ENCODE measurements at regions of chr14 and their contacts with region 1.

Region 1: GRCh38 chr14:24431569-24432258 is 2.0 kb downstream of the KHNYN start:
- DNase-seq: peak; percentile 95
- H3K4me3 ChIP-seq: peak overlapping the region; percentile 82
- H3K27ac ChIP-seq: peak overlapping the region; percentile 68
- H3K4me1 ChIP-seq: peaks cover 39% of the 10 kb centered on the region
- CTCF ChIP-seq: peak; percentile 97

Region 2: DNA sequence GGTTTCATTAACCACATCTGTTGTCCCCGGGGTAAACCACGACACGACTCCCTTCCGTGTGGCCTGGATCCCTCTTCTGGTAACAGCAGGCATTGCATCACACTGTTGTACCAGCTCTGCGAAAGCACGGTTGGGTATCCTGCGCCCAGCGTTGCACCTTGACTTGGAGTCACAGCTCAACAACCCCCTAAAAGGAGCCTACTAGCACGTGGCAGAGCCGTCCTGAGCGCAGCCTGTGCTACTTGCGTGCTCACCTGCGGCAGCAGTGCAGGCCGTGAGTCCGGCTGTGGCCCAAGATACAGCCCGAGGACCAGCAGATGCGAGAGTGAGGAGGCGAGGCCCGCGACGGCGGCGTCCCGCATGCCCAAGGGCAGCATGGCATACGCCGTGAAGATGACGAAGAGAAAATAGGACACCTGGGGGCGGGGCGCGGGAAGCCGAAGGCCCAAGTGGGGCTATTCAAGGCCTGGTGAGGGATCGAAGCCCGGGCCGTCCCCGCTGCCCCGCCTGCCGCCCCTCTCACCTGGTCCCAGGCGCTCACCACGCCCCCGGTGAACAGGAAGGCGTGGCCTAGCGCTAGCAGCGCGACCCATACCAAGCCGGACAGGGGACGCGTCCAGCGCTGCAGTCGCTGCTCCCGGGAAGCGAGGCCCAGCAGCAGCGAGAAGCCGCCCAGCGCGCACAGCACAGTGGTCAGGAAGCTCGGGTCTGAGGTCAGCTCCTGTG is 99.3 kb before region 1 on chr14:
- CTCF ChIA-PET with region 1: interaction called, 26 read pairs
- POLR2A ChIA-PET with region 1: interaction called, 6 read pairs
- intact Hi-C with region 1: loop called (anchors 1 kb)
- DNase-seq: peak; percentile 92
- H3K4me3 ChIP-seq: peak overlapping the region; percentile 26
- H3K27ac ChIP-seq: no peak overlapping the region
- H3K4me1 ChIP-seq: peaks cover 26% of the 10 kb centered on the region
- CTCF ChIP-seq: peak; percentile 84

Region 3: DNA sequence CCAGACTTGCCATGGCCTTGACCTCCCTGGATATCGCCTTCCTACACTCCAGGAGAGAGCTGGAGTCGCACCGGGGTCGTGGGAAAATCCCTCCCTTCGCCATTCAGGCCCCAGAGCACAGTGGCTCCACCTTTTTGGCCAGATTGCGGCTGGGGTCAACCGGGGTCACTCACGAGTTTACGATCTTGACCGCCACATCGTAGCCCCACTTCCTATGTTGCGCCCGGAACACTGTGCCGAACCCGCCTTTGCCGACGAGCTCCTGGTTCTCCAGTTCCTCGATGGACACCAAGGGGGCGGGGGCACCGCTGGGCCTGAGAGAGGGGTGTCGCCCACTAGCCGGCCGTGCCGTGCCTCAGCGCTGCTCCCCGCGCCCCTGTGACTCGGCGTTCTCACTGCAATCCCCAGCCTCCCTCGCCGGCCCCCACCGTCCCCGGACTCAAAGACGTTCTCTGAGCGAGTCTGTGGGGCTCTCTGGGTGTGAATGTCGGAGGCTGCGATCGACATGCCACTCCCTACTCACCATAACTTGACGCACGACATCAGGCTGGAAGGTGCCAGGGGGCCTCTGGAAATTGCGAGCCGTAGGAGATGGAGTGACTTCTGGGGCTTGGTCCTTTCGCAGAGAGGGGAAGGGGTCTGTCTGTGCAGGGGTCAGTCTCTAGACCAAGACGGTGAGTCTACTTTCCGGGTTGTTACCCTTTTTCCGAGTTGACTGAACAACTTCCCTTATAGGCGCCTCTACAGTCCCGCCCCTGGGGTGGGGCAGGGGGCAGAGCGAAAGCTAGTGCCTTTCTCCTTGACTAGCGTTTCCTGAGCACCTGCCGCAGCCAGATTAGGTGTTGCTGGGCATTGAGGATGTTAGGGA is 92.2 kb before region 1 on chr14 and contains the start of gene RIPK3:
- CTCF ChIA-PET with region 1: interaction called, 16 read pairs
- POLR2A ChIA-PET with region 1: interaction called, 6 read pairs
- intact Hi-C with region 1: no loop called
- DNase-seq: peak; percentile 70
- H3K4me3 ChIP-seq: peak within 1 kb of the TSS; percentile 71
- H3K27ac ChIP-seq: no peak within 1 kb of the TSS
- H3K4me1 ChIP-seq: peaks cover 14% of the 10 kb centered on the region
- CTCF ChIP-seq: no peak
- total RNA-seq, gene RIPK3: 8.1 and 13.8 TPM in 2 replicates

Region 4: GRCh38 chr14:24411443-24412389 is 20.0 kb before region 1 on chr14:
- CTCF ChIA-PET with region 1: interaction called, 10 read pairs
- POLR2A ChIA-PET with region 1: no interaction called
- intact Hi-C with region 1: no loop called
- DNase-seq: peak; percentile 66
- H3K4me3 ChIP-seq: no peak overlapping the region
- H3K27ac ChIP-seq: no peak overlapping the region
- H3K4me1 ChIP-seq: no peaks in the 10 kb centered on the region
- CTCF ChIP-seq: peak; percentile 77

Region 5: DNA sequence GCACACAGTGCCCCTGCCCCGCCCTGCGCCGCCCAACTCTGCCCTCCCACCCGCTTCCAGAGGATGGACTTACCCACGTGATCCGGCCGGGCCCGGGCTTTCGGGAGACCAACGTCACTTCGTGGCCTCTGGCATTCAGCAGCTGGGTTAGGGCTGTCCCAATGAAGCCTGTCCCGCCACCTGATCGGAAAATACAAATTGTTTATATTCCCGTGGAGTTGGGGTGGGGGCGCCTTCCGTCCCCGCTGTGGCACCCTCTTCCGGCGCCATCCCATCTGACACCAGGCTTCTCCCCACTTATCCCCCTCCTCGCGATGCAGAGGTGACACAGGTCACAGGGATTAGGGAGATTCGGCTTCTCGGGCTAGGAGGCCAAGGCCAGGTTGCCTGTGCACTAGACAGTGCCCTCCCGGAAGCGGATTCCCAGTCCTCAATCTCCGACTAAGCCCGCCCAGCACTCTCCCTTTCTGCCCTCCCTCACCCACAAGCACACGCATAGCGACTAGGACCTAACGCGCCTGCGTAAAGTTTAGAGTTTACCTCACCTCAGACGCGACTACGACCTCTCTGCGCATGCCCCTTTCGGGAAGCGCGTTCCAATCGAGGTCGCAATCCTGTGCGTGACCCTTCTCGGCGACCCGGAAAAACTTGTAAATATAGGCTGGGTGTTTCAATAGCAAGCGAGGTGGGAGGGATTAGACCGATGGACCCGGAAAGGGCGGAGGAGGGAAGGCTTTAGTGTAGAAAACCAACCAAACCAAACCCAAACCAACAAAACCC is 10.7 kb after region 1 on chr14 and contains the start of gene SDR39U1:
- CTCF ChIA-PET with region 1: interaction called, 10 read pairs
- POLR2A ChIA-PET with region 1: interaction called, 10 read pairs
- intact Hi-C with region 1: no loop called
- DNase-seq: peak; percentile 99
- H3K4me3 ChIP-seq: peak within 1 kb of the TSS; percentile 83
- H3K27ac ChIP-seq: peak within 1 kb of the TSS; percentile 78
- H3K4me1 ChIP-seq: peaks cover 27% of the 10 kb centered on the region
- CTCF ChIP-seq: no peak
- total RNA-seq, gene SDR39U1: 51.4 and 54.0 TPM in 2 replicates

Region 6: GRCh38 chr14:25003537-25003936 is 571.8 kb after region 1 on chr14:
- CTCF ChIA-PET with region 1: no interaction called
- POLR2A ChIA-PET with region 1: no interaction called
- intact Hi-C with region 1: no loop called
- DNase-seq: no peak
- H3K4me3 ChIP-seq: no peak overlapping the region
- H3K27ac ChIP-seq: no peak overlapping the region
- H3K4me1 ChIP-seq: no peaks in the 10 kb centered on the region
- CTCF ChIP-seq: no peak

Measured in OCI-LY7 (cell line).